Sciatic nerve (tissue), 2 donors: ENCODE measurements at regions of chr12 and their contacts with region 1.

Region 1: GRCh38 chr12:6062757-6063735 is 61.4 kb downstream of the VWF start:
- DNase-seq: no peak
- ATAC-seq: peak; percentile 72

Region 2: GRCh38 chr12:5923751-5924150 is 139.3 kb before region 1 on chr12:
- intact Hi-C with region 1: no loop called
- DNase-seq: no peak
- ATAC-seq: no peak

Region 3: DNA sequence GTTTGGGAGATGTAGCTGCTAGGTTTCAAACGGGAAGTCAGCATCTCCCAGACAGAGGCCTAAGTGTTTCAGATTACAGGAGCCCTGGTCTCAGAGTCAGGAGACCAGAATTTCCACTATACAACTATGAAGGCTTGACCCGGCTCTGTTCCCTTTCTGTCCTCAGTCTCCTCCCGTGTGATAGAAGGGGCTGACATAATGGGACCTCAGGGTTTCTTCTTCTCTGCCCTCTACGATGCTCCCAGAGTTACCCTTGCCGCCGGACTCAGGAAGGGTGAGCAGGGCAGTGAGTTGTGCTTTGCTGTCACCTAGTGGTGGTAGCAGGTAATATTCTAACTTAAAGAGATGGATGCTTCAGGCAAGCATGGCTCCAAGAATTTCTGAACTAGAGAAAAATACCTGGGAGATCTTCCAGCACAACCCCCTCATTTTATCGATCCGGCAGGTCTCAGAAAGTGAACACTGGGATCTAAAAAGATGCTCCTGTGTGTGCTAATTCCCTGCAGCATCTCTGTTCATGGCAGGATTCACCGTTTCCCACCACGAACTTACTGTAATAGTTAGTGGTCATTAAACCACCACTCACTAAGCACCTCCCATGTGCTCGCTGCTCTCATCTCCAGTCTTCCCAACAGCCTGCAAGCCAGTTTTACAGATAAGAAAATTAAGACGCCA is 23.0 kb before region 1 on chr12:
- intact Hi-C with region 1: no loop called
- DNase-seq: no peak
- ATAC-seq: peak; percentile 93

Region 4: GRCh38 chr12:6182116-6182898 is 119.3 kb after region 1 on chr12:
- intact Hi-C with region 1: loop called (anchors 10 kb)
- DNase-seq: peak; percentile 75
- ATAC-seq: peak; percentile 75

Region 5: GRCh38 chr12:6285063-6285477 is 222.0 kb after region 1 on chr12:
- intact Hi-C with region 1: loop called (anchors 10 kb)
- DNase-seq: no peak
- ATAC-seq: peak; percentile 88

Region 6: GRCh38 chr12:6407236-6407954 is 344.3 kb after region 1 on chr12:
- intact Hi-C with region 1: no loop called
- DNase-seq: no peak
- ATAC-seq: no peak